ENCODE measurements at regions of chr18 and their contacts with region 1.

Region 1: GRCh38 chr18:45802608-45803492 is 22.6 kb upstream of the SIGLEC15 start:
- DNase-seq: no peak
- H3K4me3 Mint-ChIP-seq: no peak overlapping the region
- H3K27ac Mint-ChIP-seq: no peak overlapping the region
- H3K4me1 Mint-ChIP-seq: peaks cover 6% of the 10 kb centered on the region
- H3K27me3 Mint-ChIP-seq: peaks cover 1% of the 10 kb centered on the region

Region 2: GRCh38 chr18:45817543-45817942 is 14.7 kb after region 1 on chr18:
- intact Hi-C with region 1: no loop called
- DNase-seq: no peak
- H3K4me3 Mint-ChIP-seq: no peak overlapping the region
- H3K27ac Mint-ChIP-seq: no peak overlapping the region
- H3K4me1 Mint-ChIP-seq: no peaks in the 10 kb centered on the region
- H3K27me3 Mint-ChIP-seq: peaks cover 29% of the 10 kb centered on the region

Region 3: GRCh38 chr18:45839414-45840395 is 36.9 kb after region 1 on chr18:
- intact Hi-C with region 1: no loop called
- DNase-seq: peak; percentile 69
- H3K4me3 Mint-ChIP-seq: no peak overlapping the region
- H3K27ac Mint-ChIP-seq: no peak overlapping the region
- H3K4me1 Mint-ChIP-seq: peaks cover 5% of the 10 kb centered on the region
- H3K27me3 Mint-ChIP-seq: peaks cover 57% of the 10 kb centered on the region

Region 4: DNA sequence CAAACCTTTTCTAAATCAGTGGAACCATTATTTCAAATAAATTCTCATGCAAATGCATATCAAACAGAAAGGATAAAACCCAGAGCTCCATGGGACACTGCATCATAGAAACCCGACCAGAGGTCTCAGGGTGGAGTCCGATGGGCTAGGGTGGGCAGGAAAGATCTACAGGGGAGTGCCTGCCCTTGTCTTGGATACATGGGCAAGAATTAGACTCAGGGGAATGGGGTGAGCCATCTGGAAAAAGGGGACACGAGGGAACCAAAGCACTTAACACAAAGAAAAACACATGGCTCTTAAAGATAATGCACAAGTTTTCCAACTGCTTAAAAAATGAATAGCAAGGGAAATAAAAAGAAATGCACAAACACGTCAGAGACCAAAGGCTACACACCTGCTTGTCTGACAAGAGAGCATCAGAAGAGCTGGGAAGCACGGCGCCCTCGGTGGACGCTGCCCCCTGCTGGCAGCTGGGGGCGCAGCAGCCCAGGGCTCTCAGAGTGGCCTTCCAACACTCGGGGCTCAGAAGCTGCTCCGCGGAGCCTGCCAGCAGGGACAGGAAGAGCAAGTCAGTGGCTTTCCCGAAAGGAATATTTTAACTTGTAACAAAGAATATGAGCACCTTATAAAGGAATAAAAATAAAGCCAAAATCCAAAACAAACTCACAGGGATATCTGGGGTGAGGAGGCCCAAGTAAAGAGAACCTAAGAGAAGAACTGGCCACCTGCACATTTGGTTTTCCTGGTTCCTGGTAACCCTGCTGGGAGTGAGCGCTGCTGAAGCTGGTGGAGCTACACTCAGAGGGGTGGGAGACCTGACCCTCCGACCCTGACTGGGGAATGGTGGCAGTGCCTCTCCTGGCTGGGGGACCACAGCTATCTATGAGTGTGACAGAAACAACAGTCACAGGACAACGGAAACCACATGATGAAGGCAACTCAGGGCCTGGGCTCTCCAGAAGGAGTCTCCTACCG is 77.1 kb after region 1 on chr18:
- intact Hi-C with region 1: loop called (anchors 5 kb)
- DNase-seq: peak; percentile 92
- H3K4me3 Mint-ChIP-seq: no peak overlapping the region
- H3K27ac Mint-ChIP-seq: no peak overlapping the region
- H3K4me1 Mint-ChIP-seq: peaks cover 10% of the 10 kb centered on the region
- H3K27me3 Mint-ChIP-seq: no peaks in the 10 kb centered on the region

Region 5: GRCh38 chr18:46265196-46266156 is 462.6 kb after region 1 on chr18:
- intact Hi-C with region 1: no loop called
- DNase-seq: no peak
- H3K4me3 Mint-ChIP-seq: no peak overlapping the region
- H3K27ac Mint-ChIP-seq: peak overlapping the region; percentile 57
- H3K4me1 Mint-ChIP-seq: peaks cover 52% of the 10 kb centered on the region
- H3K27me3 Mint-ChIP-seq: no peaks in the 10 kb centered on the region

Measured in activated CD4-positive, alpha-beta T cell treated with anti-CD3 and anti-CD28 coated beads, Interleukin-2, amount 10 ng/mL, durations not matched to agents 24 days and 14 days (primary cell).